ENCODE measurements at regions of chr17 and their contacts with region 1.

Region 1: DNA sequence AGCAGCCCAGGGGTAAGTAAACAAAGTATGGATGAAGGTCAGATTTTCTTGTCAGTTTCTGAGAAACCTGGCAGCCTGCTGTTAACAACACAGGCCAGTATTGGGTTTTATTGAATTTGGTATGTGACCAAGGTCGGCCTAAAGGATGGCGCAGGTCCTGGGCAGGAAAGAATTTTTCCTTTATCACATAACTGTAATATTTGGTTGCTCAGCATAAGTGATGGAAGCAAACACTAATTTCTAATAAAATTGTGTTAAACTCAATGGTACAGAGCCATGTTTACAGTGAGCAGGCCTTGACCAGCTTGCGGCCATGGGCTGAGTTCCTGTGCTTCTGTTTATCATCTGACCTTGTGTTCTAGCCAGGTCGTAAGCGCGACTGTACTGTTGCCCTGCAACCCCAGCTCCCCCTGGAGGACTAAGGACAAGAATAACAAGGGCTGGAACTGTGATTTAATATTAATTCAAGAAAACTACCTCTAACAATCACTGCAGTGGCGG is 10.5 kb downstream of the POLDIP2 start:
- DNase-seq: peak; percentile 90
- H3K4me3 ChIP-seq: no peak overlapping the region
- H3K27ac ChIP-seq: peak overlapping the region; percentile 88
- H3K4me1 ChIP-seq: peaks cover 32% of the 10 kb centered on the region
- H3K27me3 ChIP-seq: no peaks in the 10 kb centered on the region
- CTCF ChIP-seq: peak; percentile 59 to 61
- POLR2A ChIP-seq: no peak

Region 2: GRCh38 chr17:28318759-28319660 is 27.8 kb before region 1 on chr17 and contains the start of gene TMEM97:
- CTCF ChIA-PET with region 1: no interaction called
- POLR2A ChIA-PET with region 1: no interaction called
- dilution Hi-C with region 1: no loop called
- intact Hi-C with region 1: loop called (anchors 1 kb)
- DNase-seq: peak; percentile 98
- H3K4me3 ChIP-seq: peak within 1 kb of the TSS; percentile 52 to 80 (median 65)
- H3K27ac ChIP-seq: peak within 1 kb of the TSS; percentile 9
- H3K4me1 ChIP-seq: peaks cover 18% of the 10 kb centered on the region
- H3K27me3 ChIP-seq: peaks cover 0 to under 1% of the 10 kb centered on the region in 2 experiments
- CTCF ChIP-seq: no peak
- POLR2A ChIP-seq: peak; percentile 47
- total RNA-seq, gene TMEM97: 43.5 and 51.7 TPM in 2 replicates